K562 (cell line): ENCODE measurements at regions of chr1 and their contacts with region 1.

Region 1: GRCh38 chr1:8217011-8217711 is 100.8 kb upstream of the SLC45A1 start:
- DNase-seq: no peak
- ATAC-seq: peak; percentile 18; the same call in 2 of the 3 replicates
- H3K4me3 ChIP-seq: no peak overlapping the region
- H3K27ac ChIP-seq: no peak overlapping the region
- H3K4me1 ChIP-seq: peaks cover 15 to 20% of the 10 kb centered on the region in 2 experiments
- H3K27me3 ChIP-seq: peaks cover 10 to 40% of the 10 kb centered on the region in 2 experiments
- CTCF ChIP-seq: no peak
- EP300 ChIP-seq: no peak
- POLR2A ChIP-seq: no peak
- RAD21 ChIP-seq: no peak

Region 2: GRCh38 chr1:8142955-8143629 is 74.1 kb before region 1 on chr1:
- CTCF ChIA-PET with region 1: no interaction called
- POLR2A ChIA-PET with region 1: no interaction called
- in situ Hi-C with region 1: no loop called
- intact Hi-C with region 1: no loop called
- DNase-seq: no peak
- ATAC-seq: peak; percentile 46; the same call in 1 of the 3 replicates
- H3K4me3 ChIP-seq: no peak overlapping the region
- H3K27ac ChIP-seq: no peak overlapping the region
- H3K4me1 ChIP-seq: no peaks in the 10 kb centered on the region
- H3K27me3 ChIP-seq: peaks cover 54 to 55% of the 10 kb centered on the region in 2 experiments
- CTCF ChIP-seq: no peak
- EP300 ChIP-seq: no peak
- POLR2A ChIP-seq: no peak
- RAD21 ChIP-seq: no peak

Region 3: DNA sequence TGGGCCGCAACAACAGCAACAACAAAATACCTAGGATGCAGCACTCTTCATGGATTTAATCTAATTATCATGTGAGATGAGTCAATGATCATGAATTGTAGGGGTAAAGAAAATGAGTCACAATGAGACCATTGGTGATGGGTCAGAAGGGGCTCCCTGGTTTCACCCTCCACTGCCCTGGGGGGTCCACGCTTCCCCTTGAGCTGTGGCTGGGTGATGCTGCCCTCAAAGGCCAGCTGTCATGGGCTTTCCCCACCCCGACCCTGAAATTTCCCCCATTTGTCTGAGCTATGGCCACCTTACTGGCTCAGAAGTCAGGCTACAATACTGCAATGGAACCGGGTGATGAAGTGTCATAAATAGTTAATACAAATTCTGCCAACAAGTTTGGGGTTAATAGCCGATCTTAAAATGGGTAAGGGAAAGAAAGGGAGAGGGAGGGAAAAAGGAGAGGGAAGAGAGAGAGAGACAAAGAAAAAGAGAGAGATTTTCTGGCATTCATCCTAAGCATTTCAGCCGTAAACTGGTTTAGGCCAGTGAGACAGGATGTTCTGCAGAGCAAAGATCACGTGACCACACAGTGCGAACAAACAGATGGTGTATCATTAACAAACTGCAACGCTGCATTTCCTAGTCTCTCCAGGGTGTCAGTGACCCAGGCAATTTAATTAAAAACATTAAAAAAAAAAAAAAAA is 47.6 kb before region 1 on chr1:
- CTCF ChIA-PET with region 1: no interaction called
- POLR2A ChIA-PET with region 1: no interaction called
- in situ Hi-C with region 1: no loop called
- intact Hi-C with region 1: loop called (anchors 5 kb)
- DNase-seq: peak in 2 of 4 experiments; percentile 43 to 44
- ATAC-seq: peak; percentile 68
- H3K4me3 ChIP-seq: no peak overlapping the region
- H3K27ac ChIP-seq: 0 out of 3 replicates have a peak overlapping the region, but pooled peaks have one; percentile 10
- H3K4me1 ChIP-seq: peaks cover 0 to 14% of the 10 kb centered on the region in 2 experiments; a peak in 2 of 5 replicates
- H3K27me3 ChIP-seq: peaks cover 9 to 15% of the 10 kb centered on the region in 2 experiments
- CTCF ChIP-seq: no peak
- EP300 ChIP-seq: no peak; the same call in 1 of the 2 replicates
- POLR2A ChIP-seq: no peak
- RAD21 ChIP-seq: no peak